Activated CD4-positive, alpha-beta T cell treated with anti-CD3 and anti-CD28 coated beads, Interleukin-2, amount 10 ng/mL, durations not matched to agents 24 days and 14 days (primary cell): ENCODE measurements at regions of chr11 and their contacts with region 1.

Region 1: GRCh38 chr11:2885676-2886081 is at the start of gene CDKN1C:
- DNase-seq: peak; percentile 95
- H3K4me3 Mint-ChIP-seq: peak within 1 kb of the TSS; percentile 89
- H3K27ac Mint-ChIP-seq: peak within 1 kb of the TSS; percentile 17
- H3K4me1 Mint-ChIP-seq: peaks cover 5% of the 10 kb centered on the region
- H3K27me3 Mint-ChIP-seq: peaks cover 34% of the 10 kb centered on the region
- total RNA-seq, gene CDKN1C: 1.8 and 2.0 TPM in 2 replicates

Region 2: DNA sequence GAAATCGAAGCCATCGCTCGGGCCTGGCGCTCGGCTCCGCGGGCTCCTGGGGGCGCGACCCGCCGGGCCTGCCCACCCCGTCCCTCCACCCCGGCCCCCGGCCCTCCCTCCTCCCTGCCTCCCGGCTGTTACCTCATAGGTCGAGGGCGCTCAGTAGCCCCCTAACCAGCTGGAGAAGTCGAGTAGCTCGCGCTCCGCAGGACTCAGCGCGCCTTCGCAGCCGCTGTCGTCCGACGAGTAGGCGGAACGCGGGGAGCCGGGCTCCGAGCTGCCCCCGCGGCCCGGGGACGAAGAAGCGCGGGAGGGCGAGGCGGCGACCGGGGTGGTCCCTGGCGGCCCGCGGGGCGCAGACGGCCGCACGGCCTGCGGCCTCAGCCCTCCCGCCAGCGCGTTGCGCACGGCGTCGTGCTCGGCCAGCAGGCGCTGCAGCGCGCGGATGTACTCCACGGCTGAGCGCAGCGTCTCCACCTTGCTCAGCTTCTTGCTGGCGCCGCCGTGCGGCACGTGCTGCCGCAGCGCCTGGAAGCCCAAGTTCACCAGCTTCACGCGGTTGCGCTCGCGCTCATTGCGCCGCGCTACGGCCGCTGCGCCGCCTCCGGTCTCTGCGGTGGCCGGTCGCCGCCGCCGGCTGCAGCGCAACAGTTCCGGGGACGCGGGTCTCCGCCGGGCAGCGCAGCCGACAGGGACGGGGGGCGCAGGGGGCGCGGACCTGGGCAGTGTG is 615.9 kb before region 1 on chr11:
- intact Hi-C with region 1: loop called (anchors 10 kb)
- DNase-seq: peak; percentile 84
- H3K4me3 Mint-ChIP-seq: peak overlapping the region; percentile 70
- H3K27ac Mint-ChIP-seq: peak overlapping the region; percentile 70
- H3K4me1 Mint-ChIP-seq: peaks cover 19% of the 10 kb centered on the region
- H3K27me3 Mint-ChIP-seq: peaks cover 30% of the 10 kb centered on the region

Region 3: DNA sequence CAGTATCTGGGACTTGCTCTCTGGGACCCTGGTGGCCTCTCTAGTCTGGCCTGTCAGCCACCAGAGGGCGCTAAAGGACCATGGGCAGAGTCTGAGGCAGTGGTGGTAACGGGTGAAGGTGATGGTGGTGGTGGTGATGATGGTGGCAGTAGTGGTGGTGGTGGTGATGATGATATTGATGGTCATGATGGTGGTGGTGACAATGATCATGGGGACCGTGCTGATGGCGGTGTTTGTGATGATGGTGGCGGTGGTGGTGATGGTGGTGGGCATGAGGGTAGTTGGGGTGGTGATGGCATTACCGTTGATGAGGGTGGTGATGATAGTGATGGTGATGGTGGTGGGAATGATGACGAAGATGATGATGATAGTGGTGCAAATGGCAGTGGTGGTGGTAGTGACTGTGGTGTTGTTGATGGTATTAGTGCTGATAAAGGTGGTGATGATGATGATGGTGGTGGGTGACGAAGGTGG is 457.3 kb before region 1 on chr11:
- intact Hi-C with region 1: loop called (anchors 1 kb)
- DNase-seq: peak; percentile 95
- H3K4me3 Mint-ChIP-seq: no peak overlapping the region
- H3K27ac Mint-ChIP-seq: no peak overlapping the region
- H3K4me1 Mint-ChIP-seq: no peaks in the 10 kb centered on the region
- H3K27me3 Mint-ChIP-seq: no peaks in the 10 kb centered on the region

Region 4: GRCh38 chr11:2444821-2445745 is 440.6 kb before region 1 on chr11 and contains the start of gene KCNQ1:
- intact Hi-C with region 1: loop called (anchors 5 kb)
- DNase-seq: peak; percentile 90
- H3K4me3 Mint-ChIP-seq: peak within 1 kb of the TSS; percentile 91
- H3K27ac Mint-ChIP-seq: peak within 1 kb of the TSS; percentile 64
- H3K4me1 Mint-ChIP-seq: peaks cover 13% of the 10 kb centered on the region
- H3K27me3 Mint-ChIP-seq: peaks cover 19% of the 10 kb centered on the region
- total RNA-seq, gene KCNQ1: 6.4 TPM in 2 replicates

Region 5: GRCh38 chr11:2532704-2533586 is 352.7 kb before region 1 on chr11:
- intact Hi-C with region 1: loop called (anchors 1 kb)
- DNase-seq: peak; percentile 97
- H3K4me3 Mint-ChIP-seq: peak overlapping the region; percentile 77
- H3K27ac Mint-ChIP-seq: peak overlapping the region; percentile 75
- H3K4me1 Mint-ChIP-seq: peaks cover 13% of the 10 kb centered on the region
- H3K27me3 Mint-ChIP-seq: peaks cover 1% of the 10 kb centered on the region

Region 6: GRCh38 chr11:2699531-2700414 is 185.9 kb before region 1 on chr11 and contains the start of gene KCNQ1OT1:
- intact Hi-C with region 1: loop called (anchors 10 kb)
- DNase-seq: peak; percentile 96
- H3K4me3 Mint-ChIP-seq: peak within 1 kb of the TSS; percentile 89
- H3K27ac Mint-ChIP-seq: peak within 1 kb of the TSS; percentile 70
- H3K4me1 Mint-ChIP-seq: peaks cover 11% of the 10 kb centered on the region
- H3K27me3 Mint-ChIP-seq: peaks cover 3% of the 10 kb centered on the region
- total RNA-seq, gene KCNQ1OT1: 0.59 and 0.61 TPM in 2 replicates

Region 7: DNA sequence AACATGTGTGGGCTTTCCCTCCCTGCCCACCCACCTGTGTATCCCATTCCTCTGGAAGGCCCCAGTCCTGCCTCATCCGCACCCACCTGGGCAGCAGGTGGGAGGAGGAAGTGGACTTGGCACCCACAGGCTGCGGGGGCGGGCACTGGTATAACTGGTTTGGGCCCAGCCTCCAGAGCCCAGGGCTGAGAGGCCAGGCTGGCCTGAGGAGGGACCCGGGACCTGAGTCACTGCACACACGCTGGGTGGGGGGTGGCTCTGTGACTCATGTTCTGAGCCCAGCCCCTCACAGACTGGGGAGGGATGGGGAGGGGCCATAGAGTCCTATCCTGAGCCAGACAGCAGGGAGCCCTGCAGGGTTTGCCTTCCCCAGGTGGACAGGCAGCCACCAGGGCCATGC is 26.8 kb after region 1 on chr11:
- intact Hi-C with region 1: no loop called
- DNase-seq: no peak
- H3K4me3 Mint-ChIP-seq: no peak overlapping the region
- H3K27ac Mint-ChIP-seq: no peak overlapping the region
- H3K4me1 Mint-ChIP-seq: no peaks in the 10 kb centered on the region
- H3K27me3 Mint-ChIP-seq: no peaks in the 10 kb centered on the region

Region 8: DNA sequence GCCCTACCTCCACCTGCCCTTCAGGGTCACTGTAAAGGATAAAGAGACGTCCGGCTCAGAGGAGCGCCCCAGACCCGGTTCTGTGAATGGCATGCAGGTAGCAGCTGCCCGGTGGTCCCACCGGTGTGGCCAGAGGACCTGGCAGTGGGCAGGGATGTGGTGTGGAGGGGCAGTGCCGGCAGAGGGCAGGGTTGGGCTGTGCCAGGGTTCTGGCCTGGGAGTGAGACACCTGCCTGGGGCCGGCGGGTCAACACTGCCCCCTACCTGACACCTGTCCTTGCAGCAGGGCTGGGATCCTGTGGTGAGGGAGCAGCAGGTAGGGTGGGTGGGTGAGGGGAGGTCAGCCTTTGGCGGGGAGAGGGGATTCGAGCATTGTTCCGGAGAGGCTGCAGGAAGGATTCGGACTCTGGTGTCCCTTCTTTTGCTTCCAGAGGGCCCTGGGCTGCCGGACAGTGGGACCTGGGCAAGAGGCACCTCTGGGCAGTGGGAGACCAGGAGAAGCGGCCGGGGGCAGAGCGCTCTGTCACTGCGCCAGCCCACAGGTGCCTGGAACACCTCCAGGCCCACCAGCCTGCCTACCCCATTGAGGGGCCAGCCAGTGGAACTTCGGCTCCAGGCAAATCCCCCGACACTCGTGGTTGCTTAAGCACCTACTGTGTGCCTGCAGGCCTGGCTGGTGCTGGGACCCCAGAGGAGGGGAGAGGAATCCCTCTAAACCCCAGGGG is 45.2 kb after region 1 on chr11:
- intact Hi-C with region 1: loop called (anchors 2 kb)
- DNase-seq: peak; percentile 83
- H3K4me3 Mint-ChIP-seq: peak overlapping the region; percentile 92
- H3K27ac Mint-ChIP-seq: peak overlapping the region; percentile 89
- H3K4me1 Mint-ChIP-seq: peaks cover 29% of the 10 kb centered on the region
- H3K27me3 Mint-ChIP-seq: peaks cover 18% of the 10 kb centered on the region